MCF 10A (cell line): ENCODE measurements at regions of chr3 and their contacts with region 1.

Region 1: DNA sequence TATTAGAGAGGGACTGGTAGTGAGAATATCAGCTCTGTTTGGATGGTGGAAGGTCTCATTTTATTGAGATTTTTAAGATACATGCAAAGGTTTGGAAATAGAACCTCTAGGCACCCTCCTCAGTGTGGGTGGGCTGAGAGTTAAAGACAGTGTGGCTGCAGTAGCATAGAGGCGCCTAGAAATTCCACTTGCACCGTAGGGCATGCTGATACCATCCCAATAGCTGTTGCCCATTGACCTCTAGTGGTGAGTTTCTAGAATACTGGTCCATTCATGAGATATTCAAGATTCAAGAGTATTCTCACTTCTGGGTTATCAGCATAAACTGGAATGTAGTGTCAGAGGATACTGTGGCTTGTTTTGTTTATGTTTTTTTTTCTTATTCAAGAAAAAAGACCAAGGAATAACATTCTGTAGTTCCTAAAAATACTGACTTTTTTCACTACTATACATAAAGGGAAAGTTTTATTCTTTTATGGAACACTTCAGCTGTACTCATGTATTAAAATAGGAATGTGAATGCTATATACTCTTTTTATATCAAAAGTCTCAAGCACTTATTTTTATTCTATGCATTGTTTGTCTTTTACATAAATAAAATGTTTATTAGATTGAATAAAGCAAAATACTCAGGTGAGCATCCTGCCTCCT is 87.2 kb downstream of the TGFBR2 start:
- DNase-seq: peak; percentile 75
- H3K4me3 Mint-ChIP-seq: no peak overlapping the region
- H3K27ac Mint-ChIP-seq: no peak overlapping the region
- H3K4me1 Mint-ChIP-seq: peaks cover 23% of the 10 kb centered on the region
- H3K27me3 Mint-ChIP-seq: no peaks in the 10 kb centered on the region
- CTCF ChIP-seq: peak; percentile 71

Region 2: GRCh38 chr3:30042274-30042859 is 651.2 kb before region 1 on chr3:
- CTCF ChIA-PET with region 1: interaction called, 48 read pairs
- POLR2A ChIA-PET with region 1: interaction called, 10 read pairs
- intact Hi-C with region 1: loop called (anchors 1 kb)
- DNase-seq: peak; percentile 80
- H3K4me3 Mint-ChIP-seq: no peak overlapping the region
- H3K27ac Mint-ChIP-seq: no peak overlapping the region
- H3K4me1 Mint-ChIP-seq: no peaks in the 10 kb centered on the region
- H3K27me3 Mint-ChIP-seq: no peaks in the 10 kb centered on the region
- CTCF ChIP-seq: peak; percentile 86

Region 3: DNA sequence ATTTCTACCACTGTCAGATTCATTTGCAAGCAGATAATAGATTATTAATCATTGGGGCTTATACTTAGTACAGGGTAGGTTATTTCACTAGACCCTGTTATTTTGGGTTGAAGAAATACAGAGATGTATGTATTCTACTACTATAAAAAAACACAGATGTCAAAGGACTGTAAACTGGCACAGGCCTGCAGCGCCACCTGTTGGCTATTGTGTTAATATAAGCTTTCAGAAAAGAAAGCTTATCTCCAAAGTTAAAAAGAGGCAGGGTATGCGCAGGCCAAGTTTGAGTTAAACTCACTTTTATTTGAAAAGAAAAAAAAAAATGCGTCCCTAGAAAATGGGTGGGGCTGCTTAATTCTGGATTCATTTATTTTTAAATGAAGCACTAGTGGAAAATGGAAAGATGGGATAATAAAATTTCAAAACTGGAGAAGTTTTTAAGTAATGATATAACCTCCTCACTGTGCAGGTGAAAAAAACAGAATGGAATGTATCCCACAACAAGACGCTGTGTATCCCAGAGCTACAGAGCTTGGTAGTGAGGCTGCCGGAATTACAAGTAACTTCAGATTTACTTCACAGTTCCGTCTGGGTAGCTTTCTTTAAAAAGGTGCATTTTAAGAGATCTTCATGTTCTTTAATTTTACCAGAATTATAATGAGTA is 494.4 kb before region 1 on chr3:
- CTCF ChIA-PET with region 1: interaction called, 40 read pairs
- POLR2A ChIA-PET with region 1: interaction called, 4 read pairs
- intact Hi-C with region 1: loop called (anchors 1 kb)
- DNase-seq: peak; percentile 76
- H3K4me3 Mint-ChIP-seq: no peak overlapping the region
- H3K27ac Mint-ChIP-seq: peak overlapping the region; percentile 12
- H3K4me1 Mint-ChIP-seq: peaks cover 32% of the 10 kb centered on the region
- H3K27me3 Mint-ChIP-seq: no peaks in the 10 kb centered on the region
- CTCF ChIP-seq: peak; percentile 60

Region 4: GRCh38 chr3:30319713-30320112 is 373.9 kb before region 1 on chr3:
- CTCF ChIA-PET with region 1: interaction called, 14 read pairs
- POLR2A ChIA-PET with region 1: interaction called, 4 read pairs
- intact Hi-C with region 1: no loop called
- DNase-seq: peak; percentile 77
- H3K4me3 Mint-ChIP-seq: no peak overlapping the region
- H3K27ac Mint-ChIP-seq: peak overlapping the region; percentile 46
- H3K4me1 Mint-ChIP-seq: peaks cover 23% of the 10 kb centered on the region
- H3K27me3 Mint-ChIP-seq: no peaks in the 10 kb centered on the region
- CTCF ChIP-seq: peak; percentile 24

Region 5: DNA sequence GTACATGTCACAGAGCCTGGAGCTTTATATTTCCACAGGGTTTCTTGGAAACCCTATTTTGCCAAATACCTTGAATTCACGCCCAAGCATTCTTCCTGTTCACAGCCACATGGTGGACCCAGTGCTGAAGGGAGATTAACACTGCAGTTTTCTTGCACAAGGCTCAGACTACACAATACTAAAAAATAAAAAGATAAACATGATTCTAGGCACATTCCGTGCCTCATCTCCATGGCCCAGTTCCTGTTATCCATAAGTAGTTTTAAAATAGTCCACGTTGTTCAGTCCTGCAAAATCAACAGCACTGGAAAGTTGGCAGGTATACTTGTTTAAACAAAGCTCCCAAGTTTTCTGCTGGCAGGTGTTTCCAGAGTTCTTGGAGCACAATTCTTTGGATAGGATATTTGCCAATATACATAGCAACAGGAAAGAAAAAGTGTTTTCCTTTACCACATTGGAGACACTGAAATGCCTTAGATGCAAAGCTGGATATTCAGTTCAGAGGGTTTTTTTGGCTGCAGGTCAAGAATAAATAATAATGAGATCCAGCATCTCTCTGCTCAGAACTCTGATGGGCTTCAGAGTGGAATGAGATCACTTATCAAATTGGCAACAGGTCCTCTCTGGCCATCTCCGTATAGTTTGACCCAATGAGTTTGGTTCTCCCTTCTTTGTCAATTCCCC is 175.3 kb before region 1 on chr3:
- CTCF ChIA-PET with region 1: interaction called, 29 read pairs
- POLR2A ChIA-PET with region 1: interaction called, 8 read pairs
- intact Hi-C with region 1: loop called (anchors 2 kb)
- DNase-seq: peak; percentile 96
- H3K4me3 Mint-ChIP-seq: peak overlapping the region; percentile 4
- H3K27ac Mint-ChIP-seq: peak overlapping the region; percentile 89
- H3K4me1 Mint-ChIP-seq: peaks cover 46% of the 10 kb centered on the region
- H3K27me3 Mint-ChIP-seq: no peaks in the 10 kb centered on the region
- CTCF ChIP-seq: no peak

Region 6: GRCh38 chr3:30720586-30721313 is 27.2 kb after region 1 on chr3:
- CTCF ChIA-PET with region 1: interaction called, 10 read pairs
- POLR2A ChIA-PET with region 1: no interaction called
- intact Hi-C with region 1: no loop called
- DNase-seq: peak; percentile 55
- H3K4me3 Mint-ChIP-seq: peak overlapping the region; percentile 3
- H3K27ac Mint-ChIP-seq: peak overlapping the region; percentile 23
- H3K4me1 Mint-ChIP-seq: peaks cover 15% of the 10 kb centered on the region
- H3K27me3 Mint-ChIP-seq: no peaks in the 10 kb centered on the region
- CTCF ChIP-seq: no peak

Region 7: DNA sequence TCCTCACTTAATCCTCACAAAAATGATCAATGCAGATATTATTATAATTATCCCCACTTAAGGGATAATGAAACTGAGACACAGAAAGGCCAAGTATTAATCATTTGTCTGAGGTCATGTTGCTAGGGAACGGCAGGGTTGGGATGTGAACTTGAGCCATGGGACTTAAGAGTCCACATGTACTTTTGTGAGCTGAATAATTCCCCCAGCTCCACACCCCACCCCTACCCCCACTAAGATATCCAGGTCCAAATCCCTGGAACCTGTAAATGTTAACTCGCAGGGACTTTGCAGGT is 491.4 kb after region 1 on chr3:
- CTCF ChIA-PET with region 1: no interaction called
- POLR2A ChIA-PET with region 1: no interaction called
- intact Hi-C with region 1: no loop called
- DNase-seq: no peak
- H3K4me3 Mint-ChIP-seq: no peak overlapping the region
- H3K27ac Mint-ChIP-seq: no peak overlapping the region
- H3K4me1 Mint-ChIP-seq: peaks cover 7% of the 10 kb centered on the region
- H3K27me3 Mint-ChIP-seq: no peaks in the 10 kb centered on the region
- CTCF ChIP-seq: no peak